OCI-LY7 (cell line): ENCODE measurements at regions of chr13 and their contacts with region 1.

Region 1: DNA sequence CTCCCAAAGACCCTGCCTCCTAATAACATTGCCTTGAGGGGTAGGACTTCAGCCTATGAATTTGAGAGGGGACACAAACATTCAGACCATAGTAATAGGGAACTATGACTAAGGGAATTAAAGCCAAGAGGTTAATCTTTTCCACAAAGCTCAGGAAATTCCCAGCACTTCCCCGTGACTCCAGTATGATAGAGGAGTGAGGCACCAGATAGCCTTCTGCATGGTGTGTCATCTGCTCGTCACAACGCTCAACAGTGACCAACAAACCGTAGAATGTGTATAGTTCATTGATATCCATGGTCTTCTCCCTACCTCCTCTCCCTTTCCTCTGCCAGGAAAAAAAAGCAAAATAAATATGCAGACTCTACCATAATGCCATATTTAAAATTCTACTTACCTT is 64.4 kb downstream of the B3GLCT start:
- DNase-seq: no peak
- H3K4me3 ChIP-seq: no peak overlapping the region
- H3K27ac ChIP-seq: no peak overlapping the region
- H3K4me1 ChIP-seq: peaks cover 4% of the 10 kb centered on the region
- CTCF ChIP-seq: no peak

Region 2: DNA sequence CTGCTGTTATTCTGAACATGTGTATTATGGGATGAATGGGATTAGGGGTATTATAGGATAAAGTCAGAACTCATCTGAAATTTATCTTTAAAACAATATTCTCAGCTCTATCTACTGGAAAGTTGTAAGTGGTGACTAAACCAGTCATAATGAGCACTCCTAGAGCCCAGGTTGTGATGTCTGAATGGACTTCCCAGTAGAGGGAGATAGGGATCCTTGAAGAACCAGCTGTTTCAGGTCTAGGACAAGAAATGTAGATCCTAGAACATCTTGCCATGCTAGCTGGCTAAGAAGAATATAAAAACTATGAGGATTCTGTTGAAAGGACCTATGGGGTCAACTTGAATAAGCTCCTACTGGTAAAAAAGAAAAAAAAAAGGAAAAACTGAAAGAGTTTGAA is 1979.4 kb before region 1 on chr13:
- CTCF ChIA-PET with region 1: no interaction called
- POLR2A ChIA-PET with region 1: no interaction called
- intact Hi-C with region 1: no loop called
- DNase-seq: no peak
- H3K4me3 ChIP-seq: no peak overlapping the region
- H3K27ac ChIP-seq: no peak overlapping the region
- H3K4me1 ChIP-seq: no peaks in the 10 kb centered on the region
- CTCF ChIP-seq: no peak

Region 3: DNA sequence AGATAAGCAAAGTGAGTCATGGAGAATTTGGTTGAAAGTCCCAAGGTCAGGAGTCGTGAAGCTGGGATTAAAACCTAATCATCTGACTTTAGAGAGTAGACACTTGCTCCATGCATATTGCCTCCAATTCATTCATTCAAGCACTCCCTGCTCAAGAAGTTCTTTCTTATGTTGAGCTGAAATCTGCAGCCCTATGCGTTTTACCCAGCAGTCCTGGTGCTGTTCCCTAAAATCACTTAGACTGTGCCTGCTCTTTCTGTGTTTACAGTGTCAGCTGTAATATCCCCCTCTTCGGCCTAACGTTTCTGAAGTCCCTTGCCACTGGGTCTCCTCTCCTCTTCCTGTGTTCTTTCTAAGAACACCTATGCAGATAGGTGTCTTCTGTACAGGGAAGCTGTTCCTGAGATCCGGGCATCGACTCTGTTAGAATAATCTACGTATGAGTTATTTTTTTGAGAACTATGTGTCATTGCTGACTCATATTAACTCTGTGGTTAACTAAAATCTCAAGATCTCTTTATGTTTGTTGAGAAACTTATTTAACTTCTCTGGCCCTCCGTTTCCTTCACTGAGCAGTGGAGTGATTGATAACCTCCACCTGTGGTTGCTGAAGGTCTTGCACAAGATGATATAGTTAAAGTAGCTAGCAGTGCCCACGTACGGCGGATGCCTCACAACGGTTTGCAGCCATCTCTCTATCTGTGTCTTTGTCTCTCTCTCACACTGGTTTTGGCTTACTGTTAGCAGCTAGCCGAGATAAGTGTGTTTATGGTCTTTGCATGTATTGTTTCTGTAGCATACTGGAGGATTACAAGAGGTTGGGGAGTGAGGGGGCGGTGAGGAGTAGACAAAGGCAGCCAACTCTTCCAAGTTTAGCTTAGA is 524.1 kb before region 1 on chr13:
- CTCF ChIA-PET with region 1: no interaction called
- POLR2A ChIA-PET with region 1: interaction called, 11 read pairs
- intact Hi-C with region 1: no loop called
- DNase-seq: peak; percentile 5
- H3K4me3 ChIP-seq: no peak overlapping the region
- H3K27ac ChIP-seq: no peak overlapping the region
- H3K4me1 ChIP-seq: peaks cover 57% of the 10 kb centered on the region
- CTCF ChIP-seq: no peak